ENCODE measurements at regions of chr3 and their contacts with region 1.

Region 1: DNA sequence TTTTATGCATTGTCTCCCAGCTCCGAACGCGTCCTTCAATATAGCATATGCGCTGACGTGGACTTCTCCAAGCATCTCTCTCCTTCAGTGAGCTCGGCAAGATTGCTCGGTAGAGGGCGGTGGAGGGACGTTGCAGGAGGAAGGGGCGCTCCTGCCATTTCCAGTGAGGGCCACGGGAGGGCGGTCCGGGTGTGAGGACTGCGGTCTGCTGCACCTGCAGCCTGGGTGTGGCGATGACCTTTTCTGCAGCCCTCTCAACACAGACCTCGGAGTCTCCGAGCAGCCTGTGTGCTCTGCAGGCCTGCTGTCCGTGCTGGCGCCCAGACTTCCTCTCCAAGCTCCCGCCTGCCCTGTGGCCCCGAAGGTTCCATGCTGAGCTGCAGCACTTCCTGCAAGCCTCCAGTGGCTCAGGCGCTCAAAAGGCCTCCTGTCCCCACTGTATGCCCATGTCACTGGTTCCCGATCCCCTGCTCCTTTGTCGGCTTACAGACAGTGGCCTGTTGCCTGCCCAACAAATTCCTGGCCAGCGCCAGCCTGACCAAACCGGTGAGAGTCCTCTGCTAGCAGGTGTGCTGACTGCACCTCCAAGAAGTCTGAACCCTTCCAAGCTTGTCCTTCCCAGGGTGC is 8.9 kb upstream of the RTP3 start:
- DNase-seq: peak; percentile 67
- H3K4me3 ChIP-seq: no peak overlapping the region
- H3K27ac ChIP-seq: no peak overlapping the region
- H3K27me3 ChIP-seq: peaks cover 5% of the 10 kb centered on the region
- CTCF ChIP-seq: peak; percentile 100

Region 2: DNA sequence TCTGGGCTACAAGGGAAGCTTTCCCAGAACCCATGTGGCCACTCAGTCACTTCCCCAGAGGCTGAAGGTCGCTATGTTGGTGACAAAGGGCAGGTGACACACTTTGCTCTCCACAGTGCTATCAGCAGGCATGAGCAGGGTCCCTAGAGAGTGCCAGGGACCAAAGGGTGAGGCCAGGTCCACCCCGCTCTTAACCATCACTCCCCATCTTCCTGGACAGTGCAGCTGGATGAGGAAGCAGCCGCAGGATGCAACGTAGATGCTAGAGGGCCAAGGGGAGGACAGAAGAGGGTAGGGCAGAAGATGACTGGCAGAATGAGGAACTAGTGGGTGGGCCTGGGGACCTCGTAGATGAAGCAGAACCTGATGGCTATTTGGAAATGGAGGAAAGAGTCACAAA is 10.5 kb before region 1 on chr3:
- CTCF ChIA-PET with region 1: interaction called, 35 read pairs
- POLR2A ChIA-PET with region 1: no interaction called
- DNase-seq: no peak
- H3K4me3 ChIP-seq: no peak overlapping the region
- H3K27ac ChIP-seq: no peak overlapping the region
- H3K27me3 ChIP-seq: peaks cover 36% of the 10 kb centered on the region
- CTCF ChIP-seq: no peak

Region 3: DNA sequence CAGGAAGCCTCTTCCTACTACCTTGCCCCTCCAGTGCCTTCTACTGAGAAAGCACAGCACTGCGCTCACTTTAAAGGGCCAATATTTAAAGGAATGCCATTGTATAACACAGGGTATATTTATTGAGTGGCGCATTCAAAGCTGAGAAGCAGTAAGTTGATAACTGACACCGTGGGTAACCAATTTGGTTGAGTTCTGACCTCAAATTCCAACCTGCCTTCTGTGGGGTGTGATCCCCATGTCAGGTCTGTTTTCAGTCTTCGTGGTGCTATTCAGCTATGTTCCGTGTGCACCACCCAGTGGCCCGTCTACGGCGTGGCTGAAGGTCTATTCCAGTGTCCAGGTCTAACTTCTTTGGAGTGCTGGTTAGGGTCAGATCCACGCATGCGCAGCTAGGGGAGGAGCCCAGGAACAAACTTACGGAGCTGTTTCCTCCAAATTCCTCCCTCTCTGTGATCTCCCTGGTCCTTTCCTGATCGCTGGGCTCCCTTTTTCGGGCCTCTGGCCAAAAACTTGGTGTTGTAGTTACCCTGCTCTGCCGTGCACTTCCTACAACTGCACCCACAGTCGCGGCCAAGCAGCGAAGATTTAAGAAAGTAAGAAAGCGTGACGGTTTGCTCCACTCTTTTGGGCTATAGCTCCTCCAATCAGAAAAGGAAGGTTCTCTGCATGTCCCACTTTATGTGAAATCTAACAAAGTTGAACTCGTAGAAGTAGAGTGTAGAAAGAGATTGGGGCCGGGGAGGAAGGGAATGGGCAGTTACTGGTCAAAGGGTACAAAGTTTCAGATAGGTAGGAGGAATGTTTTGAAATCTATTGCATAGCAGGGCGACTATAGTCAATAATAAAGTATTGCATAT is 69.6 kb after region 1 on chr3:
- CTCF ChIA-PET with region 1: interaction called, 75 read pairs
- POLR2A ChIA-PET with region 1: interaction called, 7 read pairs
- DNase-seq: peak; percentile 64
- H3K4me3 ChIP-seq: peak overlapping the region; percentile 34
- H3K27ac ChIP-seq: peak overlapping the region; percentile 59
- H3K27me3 ChIP-seq: no peaks in the 10 kb centered on the region
- CTCF ChIP-seq: peak; percentile 61

Region 4: DNA sequence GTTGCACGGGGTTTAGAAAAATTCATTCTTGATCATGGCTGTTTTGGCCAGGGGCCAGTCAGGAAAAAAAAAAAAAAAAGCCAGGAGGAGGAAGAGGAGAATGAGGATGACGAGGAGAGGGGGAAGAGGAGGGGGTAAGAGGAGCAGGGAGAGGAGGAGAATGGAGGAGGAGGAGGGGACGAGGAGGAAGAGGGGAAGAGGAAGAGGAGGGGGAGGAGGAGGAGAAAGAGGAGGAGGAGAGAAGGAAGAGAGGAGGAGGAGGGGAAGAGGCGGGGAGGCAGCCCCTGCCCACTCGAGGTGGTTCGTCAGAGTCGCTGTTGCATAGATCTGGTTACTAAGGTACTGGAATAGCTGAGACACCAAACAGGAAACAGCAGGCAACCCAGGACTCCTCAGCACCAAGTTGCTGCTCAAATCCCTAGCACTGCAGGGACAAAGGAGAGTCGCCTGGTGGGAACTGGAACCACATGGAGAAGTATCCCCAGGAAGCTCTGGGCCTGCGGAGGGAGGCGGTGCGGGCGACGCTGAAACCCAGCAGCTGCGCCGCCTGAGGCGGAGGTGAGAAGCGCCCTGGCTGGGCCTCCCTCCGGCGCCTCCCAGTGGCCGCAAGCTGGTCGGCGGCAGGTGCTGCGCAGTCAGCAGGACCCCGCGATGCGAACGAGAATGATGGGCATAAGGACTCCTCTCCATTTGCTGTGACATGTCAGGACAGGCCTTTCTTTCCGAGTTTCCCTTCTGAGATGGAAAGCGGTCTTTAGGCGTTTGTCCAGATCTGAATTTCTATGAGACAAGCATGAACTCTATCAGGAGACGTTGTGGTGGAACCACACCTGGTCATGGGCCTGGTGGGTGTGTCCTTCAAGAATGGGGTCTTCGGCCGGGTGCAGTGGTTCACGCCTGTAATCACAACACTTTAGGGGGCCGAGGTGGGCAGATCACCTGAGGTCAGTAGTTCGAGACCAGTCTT is 141.0 kb after region 1 on chr3:
- CTCF ChIA-PET with region 1: interaction called, 129 read pairs
- POLR2A ChIA-PET with region 1: interaction called, 4 read pairs
- DNase-seq: peak; percentile 30
- H3K4me3 ChIP-seq: peak overlapping the region; percentile 49
- H3K27ac ChIP-seq: no peak overlapping the region
- H3K27me3 ChIP-seq: peaks cover 2% of the 10 kb centered on the region
- CTCF ChIP-seq: peak; percentile 99